ENCODE measurements at regions of chr21 and their contacts with region 1.

Region 1: DNA sequence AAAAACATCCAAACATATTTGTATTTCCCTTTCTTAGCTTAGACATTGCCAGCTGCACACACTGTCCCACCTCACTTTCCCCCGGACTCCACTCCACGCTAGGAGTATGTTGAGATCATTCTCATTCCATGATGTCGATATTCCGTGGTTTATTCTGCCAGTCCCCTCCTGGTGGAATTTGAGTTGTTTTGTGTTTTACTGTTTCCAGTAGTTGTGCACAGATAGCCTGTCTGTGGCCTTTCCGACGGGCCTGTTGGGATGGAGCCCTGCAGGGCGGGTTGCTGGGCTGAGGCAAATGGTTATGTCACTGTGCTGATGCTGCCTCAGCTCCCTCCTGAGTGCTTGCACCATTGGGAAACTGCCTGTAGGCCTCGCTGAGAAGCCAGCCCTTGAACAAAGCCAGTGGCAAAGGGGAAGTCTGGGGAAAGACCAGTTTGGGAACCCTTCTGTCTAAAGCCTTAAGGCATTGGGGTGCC is 12.8 kb downstream of the TRAPPC10 start:
- DNase-seq: no peak
- ATAC-seq: peak; percentile 28
- H3K4me3 ChIP-seq: no peak overlapping the region
- H3K27ac ChIP-seq: peak overlapping the region; percentile 5
- H3K4me1 ChIP-seq: peaks cover 6% of the 10 kb centered on the region; the same call in 1 of the 2 replicates
- H3K27me3 ChIP-seq: no peaks in the 10 kb centered on the region
- CTCF ChIP-seq: no peak
- EP300 ChIP-seq: no peak
- POLR2A ChIP-seq: no peak
- RAD21 ChIP-seq: no peak

Region 2: GRCh38 chr21:43754948-43755781 is 269.8 kb before region 1 on chr21:
- CTCF ChIA-PET with region 1: no interaction called
- POLR2A ChIA-PET with region 1: no interaction called
- RAD21 ChIA-PET with region 1: no interaction called
- SMC1A ChIA-PET with region 1: no interaction called
- in situ Hi-C with region 1: no loop called
- intact Hi-C with region 1: no loop called
- DNase-seq: no peak
- ATAC-seq: peak; percentile 54
- H3K4me3 ChIP-seq: no peak overlapping the region
- H3K27ac ChIP-seq: no peak overlapping the region
- H3K4me1 ChIP-seq: no peaks in the 10 kb centered on the region
- H3K27me3 ChIP-seq: no peaks in the 10 kb centered on the region
- CTCF ChIP-seq: no peak
- EP300 ChIP-seq: no peak
- POLR2A ChIP-seq: no peak; the same call in none of the 2 replicates
- RAD21 ChIP-seq: no peak

Region 3: GRCh38 chr21:44012528-44013379 is 12.2 kb before region 1 on chr21:
- CTCF ChIA-PET with region 1: interaction called, 7 read pairs
- POLR2A ChIA-PET with region 1: interaction called, 10 read pairs
- RAD21 ChIA-PET with region 1: interaction called, 4 read pairs
- SMC1A ChIA-PET with region 1: interaction called, 11 read pairs
- in situ Hi-C with region 1: no loop called
- intact Hi-C with region 1: no loop called
- DNase-seq: peak; percentile 27
- ATAC-seq: peak; percentile 73
- H3K4me3 ChIP-seq: peak overlapping the region; percentile 88
- H3K27ac ChIP-seq: peak overlapping the region; percentile 79
- H3K4me1 ChIP-seq: peaks cover 6% of the 10 kb centered on the region; the same call in 1 of the 2 replicates
- H3K27me3 ChIP-seq: no peaks in the 10 kb centered on the region
- CTCF ChIP-seq: peak; percentile 43 to 58 (median 48); a peak in 5 of 6 replicates
- EP300 ChIP-seq: no peak
- POLR2A ChIP-seq: no peak; the same call in 1 of the 2 replicates
- RAD21 ChIP-seq: peak; percentile 56